K562 (cell line): ENCODE measurements at regions of chr9 and their contacts with region 1.

Region 1: GRCh38 chr9:96232539-96233241 is 69.3 kb downstream of the HSD17B3 start:
- DNase-seq: peak; percentile 32 to 62 (median 48)
- ATAC-seq: peak; percentile 93
- H3K4me3 ChIP-seq: no peak overlapping the region
- H3K27ac ChIP-seq: no peak overlapping the region
- H3K4me1 ChIP-seq: no peaks in the 10 kb centered on the region; a peak in 1 of 5 replicates
- H3K27me3 ChIP-seq: peaks cover 2 to 13% of the 10 kb centered on the region in 2 experiments; a peak in 3 of 5 replicates
- CTCF ChIP-seq: peak; percentile 75 to 88 (median 88)
- EP300 ChIP-seq: no peak
- POLR2A ChIP-seq: no peak
- RAD21 ChIP-seq: peak; percentile 53 to 81

Region 2: DNA sequence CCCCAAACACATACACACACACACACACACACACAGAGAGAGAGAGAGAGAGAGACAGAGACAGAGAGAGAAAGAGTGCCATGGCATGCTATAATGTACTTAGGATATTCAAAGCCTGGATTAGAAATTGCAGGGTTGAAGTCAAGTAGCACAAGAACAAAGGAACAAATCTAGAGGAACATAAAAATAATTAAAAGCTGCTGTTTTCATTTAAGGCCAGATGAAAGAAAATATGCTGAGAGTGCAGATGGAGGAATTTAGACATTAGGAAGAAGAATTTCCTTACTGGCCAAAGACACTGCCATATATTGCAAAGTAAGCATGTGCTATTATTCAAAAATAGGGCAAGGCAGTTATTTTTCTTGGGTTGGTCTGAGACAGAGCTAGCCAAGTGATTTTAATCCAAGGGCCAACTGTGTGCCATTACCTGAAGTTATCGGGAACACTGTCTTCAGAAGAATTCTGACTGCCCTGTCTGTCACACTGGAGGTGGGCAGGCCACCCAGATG is 37.6 kb after region 1 on chr9:
- CTCF ChIA-PET with region 1: no interaction called
- POLR2A ChIA-PET with region 1: no interaction called
- in situ Hi-C with region 1: no loop called
- intact Hi-C with region 1: no loop called
- DNase-seq: no peak
- ATAC-seq: no peak
- H3K4me3 ChIP-seq: no peak overlapping the region
- H3K27ac ChIP-seq: no peak overlapping the region
- H3K4me1 ChIP-seq: no peaks in the 10 kb centered on the region
- H3K27me3 ChIP-seq: no peaks in the 10 kb centered on the region
- CTCF ChIP-seq: no peak
- EP300 ChIP-seq: no peak
- POLR2A ChIP-seq: no peak
- RAD21 ChIP-seq: no peak

Region 3: DNA sequence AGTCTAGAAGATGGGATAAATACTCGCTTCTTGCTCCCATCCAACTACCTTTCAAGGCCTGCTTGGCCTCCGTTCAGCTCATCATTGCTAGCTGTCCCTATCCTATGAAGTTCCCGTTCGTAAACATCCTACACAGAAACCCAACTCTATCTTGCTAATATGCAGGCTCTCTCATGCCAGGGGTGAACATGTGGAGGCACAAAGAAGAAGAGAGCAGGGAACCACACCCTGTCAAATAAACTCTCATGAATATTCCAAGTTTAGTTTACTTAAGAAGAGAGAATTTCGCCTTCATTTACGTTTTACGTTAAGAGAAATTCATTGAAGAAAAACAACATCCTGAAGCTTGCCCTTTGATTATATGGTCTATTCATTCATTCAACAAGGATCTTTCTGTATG is 77.2 kb after region 1 on chr9:
- CTCF ChIA-PET with region 1: no interaction called
- POLR2A ChIA-PET with region 1: no interaction called
- in situ Hi-C with region 1: loop called (anchors 5 kb)
- intact Hi-C with region 1: no loop called
- DNase-seq: no peak
- ATAC-seq: no peak
- H3K4me3 ChIP-seq: no peak overlapping the region
- H3K27ac ChIP-seq: no peak overlapping the region
- H3K4me1 ChIP-seq: no peaks in the 10 kb centered on the region
- H3K27me3 ChIP-seq: peaks cover 0 to 5% of the 10 kb centered on the region in 2 experiments; a peak in 1 of 5 replicates
- CTCF ChIP-seq: no peak
- EP300 ChIP-seq: no peak
- POLR2A ChIP-seq: no peak
- RAD21 ChIP-seq: no peak

Region 4: DNA sequence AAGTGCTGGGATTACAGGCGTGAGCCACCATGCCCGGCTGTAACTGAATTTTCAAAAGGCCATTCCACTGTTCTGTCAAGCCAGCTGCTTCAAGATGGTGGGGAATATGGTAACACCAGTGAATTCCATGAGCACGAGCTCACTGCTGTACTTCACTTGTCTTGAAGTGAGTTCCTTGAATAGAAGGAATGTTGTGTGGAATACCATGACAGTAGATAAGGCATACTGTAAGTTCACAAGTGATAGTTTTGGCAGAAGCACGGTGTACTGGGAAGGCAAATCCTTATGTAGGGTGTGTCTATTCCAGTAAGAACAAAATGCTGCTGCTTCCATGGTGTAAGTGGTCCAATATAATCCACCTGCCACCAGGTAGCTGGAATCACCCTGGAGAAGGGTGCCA is 429.0 kb after region 1 on chr9:
- CTCF ChIA-PET with region 1: interaction called, 3 read pairs
- POLR2A ChIA-PET with region 1: no interaction called
- in situ Hi-C with region 1: no loop called
- intact Hi-C with region 1: loop called (anchors 10 kb)
- DNase-seq: no peak
- ATAC-seq: no peak
- H3K4me3 ChIP-seq: no peak overlapping the region
- H3K27ac ChIP-seq: no peak overlapping the region
- H3K4me1 ChIP-seq: peaks cover 0 to 4% of the 10 kb centered on the region in 2 experiments; a peak in 1 of 5 replicates
- H3K27me3 ChIP-seq: no peaks in the 10 kb centered on the region; a peak in 1 of 5 replicates
- CTCF ChIP-seq: no peak
- EP300 ChIP-seq: no peak
- POLR2A ChIP-seq: no peak
- RAD21 ChIP-seq: no peak